Right ventricle myocardium inferior (tissue), 1 donor: ENCODE measurements at regions of chr3 and their contacts with region 1.

Region 1: GRCh38 chr3:15332405-15333098 is at the start of gene SH3BP5:
- DNase-seq: peak; percentile 91
- ATAC-seq: peak; percentile 81
- total RNA-seq, gene SH3BP5: 11.7 TPM

Region 2: DNA sequence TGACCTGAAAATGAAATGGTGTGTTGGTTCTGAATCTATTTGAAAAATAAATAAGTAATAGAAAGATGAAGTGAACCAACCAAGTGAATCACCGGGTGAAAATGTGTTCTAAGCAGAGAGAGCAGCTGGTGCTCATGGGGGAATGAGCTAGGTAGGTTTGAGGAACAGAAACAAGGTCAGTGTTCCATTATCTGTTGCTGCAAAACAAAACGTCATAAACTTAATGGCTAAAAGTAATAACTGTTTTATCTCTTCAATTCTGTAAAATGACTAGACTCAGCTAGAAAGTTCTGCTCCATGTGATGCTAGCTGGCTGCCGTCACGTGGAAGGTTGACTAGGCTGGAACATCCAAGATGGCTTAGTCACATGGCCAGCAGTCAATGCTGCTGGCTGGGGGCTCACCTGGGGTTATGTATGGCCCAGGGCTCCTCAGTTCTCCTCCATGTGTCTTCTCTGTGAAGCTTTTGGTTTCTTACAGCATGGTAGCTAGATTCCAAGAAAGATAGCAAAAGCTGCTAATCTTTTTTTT is 13.1 kb after region 1 on chr3:
- intact Hi-C with region 1: no loop called
- DNase-seq: no peak
- ATAC-seq: no peak

Region 3: GRCh38 chr3:15377961-15378791 is 45.6 kb after region 1 on chr3:
- intact Hi-C with region 1: loop called (anchors 2 kb)
- DNase-seq: peak; percentile 97
- ATAC-seq: peak; percentile 95